ENCODE measurements at regions of chr5 and their contacts with region 1.

Region 1: DNA sequence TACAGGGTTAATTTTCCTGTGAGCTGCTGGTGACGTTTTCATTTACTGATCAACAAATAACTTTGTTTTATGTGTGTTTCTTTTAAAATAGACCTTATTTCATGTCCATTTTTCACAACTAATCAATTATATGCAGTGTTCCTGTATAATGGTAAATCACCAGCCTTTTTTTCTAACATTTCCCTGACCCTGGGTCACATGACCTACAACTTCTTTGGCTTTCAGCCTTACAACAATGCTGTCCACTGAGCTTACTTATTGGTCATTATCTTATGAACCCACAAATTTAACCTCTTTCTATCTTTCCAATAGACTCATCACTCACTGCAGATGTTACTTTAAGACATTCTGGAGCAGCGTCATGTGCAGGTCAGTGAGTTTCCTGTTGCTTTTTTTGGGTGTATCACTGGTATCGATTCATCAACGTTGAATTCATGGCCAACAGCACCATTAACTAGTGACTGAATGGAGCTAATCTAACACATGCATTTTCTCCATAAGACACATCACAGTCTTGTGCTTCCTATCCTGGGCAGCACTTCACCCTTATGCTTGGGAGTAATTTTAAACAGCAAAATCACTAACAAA is 672.5 kb upstream of the CDH18 start:
- DNase-seq: no peak

Region 2: DNA sequence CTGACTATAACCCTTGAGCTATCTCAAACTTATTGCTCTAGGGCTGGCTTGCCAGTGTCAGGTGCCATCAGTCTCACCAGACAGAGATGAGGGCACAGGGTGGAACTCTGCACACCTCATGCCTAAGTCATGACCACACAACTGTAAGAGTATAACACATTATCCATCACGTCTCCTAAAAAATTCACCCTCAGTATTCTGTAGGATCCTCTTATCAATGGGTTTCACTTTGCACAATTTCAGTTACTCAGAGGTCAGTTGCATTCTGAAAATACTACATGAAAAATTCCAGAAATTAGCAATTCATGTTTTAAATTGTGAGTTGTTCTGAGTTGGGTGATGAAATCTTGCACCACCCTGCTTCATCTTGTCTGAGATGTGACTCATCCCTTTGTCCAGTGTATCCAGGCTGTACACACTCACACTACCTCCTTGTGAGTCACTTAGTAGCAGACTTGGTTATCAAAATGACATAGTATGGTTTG is 18.4 kb after region 1 on chr5:
- intact Hi-C with region 1: loop called in 1 of 2 experiments (anchors 1 kb)
- DNase-seq: no peak

Measured in posterior vena cava (tissue), 2 donors.